Caco-2 (cell line): ENCODE measurements at regions of chr1 and their contacts with region 1.

Region 1: GRCh38 chr1:109397538-109398342 is at the start of gene SORT1:
- DNase-seq: peak; percentile 91 to 94
- H3K4me3 ChIP-seq: peak within 1 kb of the TSS; percentile 51
- H3K4me3 Mint-ChIP-seq: peak within 1 kb of the TSS; percentile 79
- H3K27ac Mint-ChIP-seq: peak within 1 kb of the TSS; percentile 73
- H3K4me1 ChIP-seq: peaks cover 31% of the 10 kb centered on the region
- H3K4me1 Mint-ChIP-seq: peaks cover 14% of the 10 kb centered on the region
- H3K27me3 ChIP-seq: no peaks in the 10 kb centered on the region
- H3K27me3 Mint-ChIP-seq: no peaks in the 10 kb centered on the region
- CTCF ChIP-seq: no peak
- total RNA-seq, gene SORT1: 65.2 and 67.1 TPM in 2 replicates

Region 2: DNA sequence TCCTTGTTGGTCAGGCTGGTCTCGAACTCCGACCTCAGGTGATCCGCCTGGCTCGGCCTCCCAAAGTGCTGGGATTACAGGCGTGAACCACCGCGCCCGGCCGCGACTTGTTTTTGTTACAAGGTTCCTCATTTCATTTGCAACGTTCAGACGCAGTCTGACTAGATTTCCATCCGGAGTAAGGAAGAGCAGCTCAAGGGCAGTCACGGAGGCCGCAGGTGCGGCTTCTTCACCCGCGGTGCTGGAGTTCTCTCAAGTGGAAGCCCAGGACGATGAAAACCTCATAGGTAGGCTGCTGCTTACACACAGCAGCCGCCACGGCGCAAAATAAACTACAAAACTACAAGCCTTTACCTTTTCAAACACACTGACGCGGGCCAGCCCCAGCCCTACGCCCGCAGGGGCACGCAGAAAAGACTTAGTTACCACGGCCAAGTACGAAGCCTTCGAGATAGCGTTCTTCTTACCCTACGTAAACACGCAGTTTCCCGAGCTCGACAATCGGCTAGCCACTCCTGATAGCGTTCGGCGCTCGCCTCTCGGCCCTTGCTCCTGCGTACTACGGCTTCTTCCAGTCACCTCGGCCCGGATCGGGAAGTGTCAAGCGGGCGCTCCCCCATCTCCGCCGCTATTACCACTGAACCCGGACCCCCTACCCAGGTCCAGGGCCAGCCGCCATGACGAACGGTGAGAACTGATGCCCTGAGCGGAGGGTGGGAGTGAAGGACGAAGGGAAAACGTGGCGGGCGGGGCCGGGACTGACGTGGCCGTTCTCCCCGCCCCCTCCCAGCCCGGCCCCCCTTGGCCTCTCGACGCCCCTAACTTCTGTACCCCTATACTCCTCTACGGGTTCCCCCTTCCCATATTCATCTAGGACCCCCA is 307.3 kb before region 1 on chr1 and contains the start of gene TMEM167B:
- CTCF ChIA-PET with region 1: no interaction called
- POLR2A ChIA-PET with region 1: no interaction called
- intact Hi-C with region 1: loop called (anchors 5 kb)
- DNase-seq: peak; percentile 85 to 92
- H3K4me3 ChIP-seq: peak within 1 kb of the TSS; percentile 48
- H3K4me3 Mint-ChIP-seq: peak within 1 kb of the TSS; percentile 96
- H3K27ac Mint-ChIP-seq: peak within 1 kb of the TSS; percentile 94
- H3K4me1 ChIP-seq: no peaks in the 10 kb centered on the region
- H3K4me1 Mint-ChIP-seq: peaks cover 6% of the 10 kb centered on the region
- H3K27me3 ChIP-seq: no peaks in the 10 kb centered on the region
- H3K27me3 Mint-ChIP-seq: no peaks in the 10 kb centered on the region
- CTCF ChIP-seq: no peak
- total RNA-seq, gene TMEM167B: 21.8 and 23.5 TPM in 2 replicates

Region 3: GRCh38 chr1:109263597-109264398 is 133.9 kb before region 1 on chr1:
- CTCF ChIA-PET with region 1: interaction called, 15 read pairs
- POLR2A ChIA-PET with region 1: no interaction called
- intact Hi-C with region 1: loop called (anchors 1 kb)
- DNase-seq: peak; percentile 92 to 94
- H3K4me3 ChIP-seq: no peak overlapping the region
- H3K4me3 Mint-ChIP-seq: no peak overlapping the region
- H3K27ac Mint-ChIP-seq: no peak overlapping the region
- H3K4me1 ChIP-seq: no peaks in the 10 kb centered on the region
- H3K4me1 Mint-ChIP-seq: no peaks in the 10 kb centered on the region
- H3K27me3 ChIP-seq: no peaks in the 10 kb centered on the region
- H3K27me3 Mint-ChIP-seq: no peaks in the 10 kb centered on the region
- CTCF ChIP-seq: peak; percentile 96 to 97

Region 4: DNA sequence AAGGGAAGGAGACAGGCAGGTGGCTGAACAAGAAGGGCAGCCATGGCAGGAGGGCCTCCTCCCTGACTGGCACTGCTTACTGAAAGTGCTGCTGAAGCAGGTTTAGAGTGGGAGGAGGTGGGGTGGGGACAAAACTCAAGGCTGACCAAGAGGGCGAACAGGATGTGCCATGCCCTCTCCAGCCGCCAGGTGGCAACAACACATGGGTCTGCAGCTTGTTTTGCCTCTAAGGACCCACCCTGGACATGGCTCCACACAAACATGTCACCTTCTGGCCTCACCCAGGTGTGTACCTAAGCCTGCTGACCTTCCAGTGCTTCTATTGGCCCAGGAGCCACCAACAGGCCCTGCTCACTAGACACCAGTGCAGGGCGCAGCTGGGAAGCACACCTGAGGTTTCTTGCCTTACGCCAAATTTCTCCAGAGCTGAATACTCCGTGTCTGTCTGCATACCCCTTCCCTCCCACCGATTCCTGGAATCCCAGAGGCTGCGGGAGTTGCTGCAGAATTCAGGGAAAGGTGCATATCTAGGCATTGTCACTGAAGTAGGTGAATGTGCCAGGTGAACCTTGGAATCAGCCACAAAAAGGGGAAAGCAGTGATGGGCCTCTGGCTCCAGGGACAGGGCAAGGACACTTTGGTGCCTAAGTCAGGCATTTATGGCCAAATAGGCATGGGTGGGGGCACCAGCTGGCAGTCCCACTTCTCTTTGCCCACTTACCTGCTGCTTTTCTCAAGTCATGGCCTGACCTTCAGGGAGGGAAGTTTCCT is 120.1 kb before region 1 on chr1:
- CTCF ChIA-PET with region 1: interaction called, 15 read pairs
- POLR2A ChIA-PET with region 1: interaction called, 4 read pairs
- intact Hi-C with region 1: loop called (anchors 1 kb)
- DNase-seq: peak; percentile 83 to 84
- H3K4me3 ChIP-seq: no peak overlapping the region
- H3K4me3 Mint-ChIP-seq: no peak overlapping the region
- H3K27ac Mint-ChIP-seq: peak overlapping the region; percentile 5
- H3K4me1 ChIP-seq: peaks cover 41% of the 10 kb centered on the region
- H3K4me1 Mint-ChIP-seq: peaks cover 15% of the 10 kb centered on the region
- H3K27me3 ChIP-seq: no peaks in the 10 kb centered on the region
- H3K27me3 Mint-ChIP-seq: no peaks in the 10 kb centered on the region
- CTCF ChIP-seq: peak; percentile 72 to 74

Region 5: DNA sequence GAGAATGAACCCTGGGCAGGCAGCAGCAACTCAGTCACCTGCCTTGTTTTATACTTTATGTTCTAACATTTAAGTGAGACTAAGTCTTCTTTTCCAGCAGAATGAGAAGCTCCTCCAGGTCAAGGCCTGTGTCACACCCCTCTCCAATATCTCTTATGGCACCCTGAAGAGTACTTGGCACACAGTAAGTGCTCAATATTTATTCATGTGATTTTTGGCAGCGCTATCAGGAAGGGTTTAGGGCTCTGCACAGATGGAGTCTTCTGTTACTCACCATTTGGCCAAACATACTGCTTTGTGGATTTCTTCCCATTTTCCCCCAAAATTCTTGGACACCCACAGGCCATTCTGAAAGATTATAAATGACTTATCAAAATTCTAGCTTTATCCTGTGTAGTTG is 47.1 kb before region 1 on chr1:
- CTCF ChIA-PET with region 1: no interaction called
- POLR2A ChIA-PET with region 1: no interaction called
- intact Hi-C with region 1: loop called (anchors 1 kb)
- DNase-seq: no peak
- H3K4me3 ChIP-seq: no peak overlapping the region
- H3K4me3 Mint-ChIP-seq: no peak overlapping the region
- H3K27ac Mint-ChIP-seq: no peak overlapping the region
- H3K4me1 ChIP-seq: no peaks in the 10 kb centered on the region
- H3K4me1 Mint-ChIP-seq: no peaks in the 10 kb centered on the region
- H3K27me3 ChIP-seq: no peaks in the 10 kb centered on the region
- H3K27me3 Mint-ChIP-seq: no peaks in the 10 kb centered on the region
- CTCF ChIP-seq: no peak

Region 6: DNA sequence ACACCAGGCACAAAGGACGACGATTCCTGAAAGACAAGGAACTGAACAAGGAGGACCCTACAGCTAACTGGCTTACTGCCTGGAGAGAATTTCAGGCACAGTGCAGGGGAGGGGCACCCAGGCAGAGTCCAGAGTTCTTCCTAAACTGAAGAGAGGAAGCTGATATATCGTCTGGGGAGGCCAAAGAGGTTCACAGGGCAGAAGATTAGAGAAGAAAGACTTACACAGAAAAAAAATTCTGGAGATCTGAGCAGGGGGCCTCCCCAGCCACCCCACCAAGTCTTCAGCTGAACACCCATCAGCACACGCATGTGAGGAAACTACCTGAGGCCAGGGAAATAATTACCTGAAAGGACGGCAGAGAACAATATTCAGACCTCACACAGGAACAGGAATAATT is 24.6 kb before region 1 on chr1:
- CTCF ChIA-PET with region 1: no interaction called
- POLR2A ChIA-PET with region 1: interaction called, 4 read pairs
- intact Hi-C with region 1: loop called (anchors 1 kb)
- DNase-seq: peak; percentile 15 to 38
- H3K4me3 ChIP-seq: no peak overlapping the region
- H3K4me3 Mint-ChIP-seq: peak overlapping the region; percentile 25
- H3K27ac Mint-ChIP-seq: peak overlapping the region; percentile 49
- H3K4me1 ChIP-seq: peaks cover 31% of the 10 kb centered on the region
- H3K4me1 Mint-ChIP-seq: peaks cover 7% of the 10 kb centered on the region
- H3K27me3 ChIP-seq: no peaks in the 10 kb centered on the region
- H3K27me3 Mint-ChIP-seq: no peaks in the 10 kb centered on the region
- CTCF ChIP-seq: no peak

Region 7: GRCh38 chr1:109630081-109630897 is 232.5 kb after region 1 on chr1:
- CTCF ChIA-PET with region 1: interaction called, 13 read pairs
- POLR2A ChIA-PET with region 1: no interaction called
- intact Hi-C with region 1: no loop called
- DNase-seq: peak in 1 of 2 experiments; percentile 30
- H3K4me3 ChIP-seq: no peak overlapping the region
- H3K4me3 Mint-ChIP-seq: no peak overlapping the region
- H3K27ac Mint-ChIP-seq: no peak overlapping the region
- H3K4me1 ChIP-seq: no peaks in the 10 kb centered on the region
- H3K4me1 Mint-ChIP-seq: no peaks in the 10 kb centered on the region
- H3K27me3 ChIP-seq: no peaks in the 10 kb centered on the region
- H3K27me3 Mint-ChIP-seq: no peaks in the 10 kb centered on the region
- CTCF ChIP-seq: peak in 1 of 2 experiments; percentile 33